CD4-positive, alpha-beta memory T cell (primary cell): ENCODE measurements at regions of chr9 and their contacts with region 1.

Region 1: DNA sequence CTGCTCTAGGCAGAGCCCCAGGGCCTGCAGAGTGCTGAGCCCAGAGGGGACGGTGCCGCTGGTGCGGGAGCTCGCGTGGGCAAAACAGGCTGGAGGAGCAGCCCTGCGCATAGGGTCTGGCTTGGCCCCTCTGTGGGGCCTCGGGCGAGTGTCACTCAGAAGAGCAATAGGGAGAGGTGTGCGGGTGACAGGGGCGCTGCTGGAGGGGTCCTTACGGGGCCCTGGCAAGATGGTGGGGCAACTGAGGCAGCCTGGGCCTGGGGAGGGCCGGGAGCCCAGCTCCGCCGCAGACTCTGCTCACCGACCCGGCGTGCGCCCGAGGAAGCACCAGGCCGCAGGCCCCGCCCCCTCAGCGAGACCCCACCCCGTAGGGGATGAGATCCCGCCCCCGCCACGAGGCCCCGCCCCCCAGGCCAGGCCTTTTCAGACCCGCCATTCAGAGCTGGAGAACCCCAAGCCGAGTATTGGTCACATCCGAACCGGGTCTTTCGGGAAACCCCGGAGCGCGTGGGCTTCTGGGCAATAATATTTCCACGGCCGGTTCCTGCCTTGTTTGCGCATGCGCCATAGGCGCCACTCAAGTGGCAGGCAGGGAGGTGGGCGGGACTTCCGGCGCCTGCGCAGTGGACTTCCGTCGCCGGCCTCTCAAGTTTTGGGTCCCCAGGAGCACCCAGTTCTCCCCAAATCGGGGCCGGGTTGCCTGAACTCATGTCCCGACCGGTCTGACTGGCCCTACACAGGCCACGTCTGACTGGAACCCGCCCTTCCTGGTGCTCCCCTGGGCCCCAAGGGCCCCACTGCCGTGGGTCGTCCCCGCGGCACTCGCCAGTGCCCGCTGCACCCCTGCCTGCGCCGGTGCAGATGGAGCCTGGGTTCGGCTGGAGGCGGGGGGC is 1.3 kb upstream of the RNF208 start:
- DNase-seq: peak; percentile 96 to 99 (median 99)
- H3K4me3 ChIP-seq: peak overlapping the region; percentile 66 to 85
- H3K4me3 Mint-ChIP-seq: peak overlapping the region; percentile 62 to 84 (median 77)
- H3K27ac ChIP-seq: peak overlapping the region; percentile 83
- H3K27ac Mint-ChIP-seq: peak overlapping the region; percentile 42 to 87 (median 68)
- H3K4me1 ChIP-seq: peaks cover 18% of the 10 kb centered on the region
- H3K4me1 Mint-ChIP-seq: peaks cover 2 to 19% (median 6%) of the 10 kb centered on the region in 4 donors
- H3K27me3 ChIP-seq: no peaks in the 10 kb centered on the region
- H3K27me3 Mint-ChIP-seq: peaks cover 2 to 3% of the 10 kb centered on the region in 2 donors

Region 2: GRCh38 chr9:136728080-136728547 is 495.2 kb before region 1 on chr9:
- CTCF ChIA-PET with region 1: no interaction called
- POLR2A ChIA-PET with region 1: interaction called, 3 read pairs
- intact Hi-C with region 1: loop called (anchors 5 kb)
- DNase-seq: peak; percentile 85 to 92 (median 91)
- H3K4me3 ChIP-seq: peak overlapping the region; percentile 88 to 94
- H3K4me3 Mint-ChIP-seq: peak overlapping the region; percentile 48 to 97 (median 76)
- H3K27ac ChIP-seq: peak overlapping the region; percentile 72
- H3K27ac Mint-ChIP-seq: peak overlapping the region in 2 of 7 donors; percentile 51 to 97
- H3K4me1 ChIP-seq: peaks cover 30% of the 10 kb centered on the region
- H3K4me1 Mint-ChIP-seq: peaks cover 7 to 42% (median 22%) of the 10 kb centered on the region in 4 donors
- H3K27me3 ChIP-seq: no peaks in the 10 kb centered on the region
- H3K27me3 Mint-ChIP-seq: peaks cover 0 to 4% of the 10 kb centered on the region in 2 donors

Region 3: GRCh38 chr9:137046098-137046787 is 177.1 kb before region 1 on chr9 and contains the start of gene NPDC1:
- CTCF ChIA-PET with region 1: interaction called, 3 read pairs
- POLR2A ChIA-PET with region 1: no interaction called
- intact Hi-C with region 1: loop called (anchors 1 kb)
- DNase-seq: peak; percentile 72 to 79 (median 77)
- H3K4me3 ChIP-seq: peak within 1 kb of the TSS in 1 of 2 donors; percentile 72
- H3K4me3 Mint-ChIP-seq: peak within 1 kb of the TSS; percentile 72 to 88 (median 82)
- H3K27ac ChIP-seq: no peak within 1 kb of the TSS
- H3K27ac Mint-ChIP-seq: peak within 1 kb of the TSS in 3 of 7 donors; percentile 52 to 84 (median 53)
- H3K4me1 ChIP-seq: peaks cover 37% of the 10 kb centered on the region
- H3K4me1 Mint-ChIP-seq: peaks cover 3 to 22% (median 9%) of the 10 kb centered on the region in 4 donors
- H3K27me3 ChIP-seq: peaks cover 32% of the 10 kb centered on the region
- H3K27me3 Mint-ChIP-seq: peaks cover 15 to 19% of the 10 kb centered on the region in 2 donors
- total RNA-seq, gene NPDC1: 20.7 to 21.4 TPM

Region 4: DNA sequence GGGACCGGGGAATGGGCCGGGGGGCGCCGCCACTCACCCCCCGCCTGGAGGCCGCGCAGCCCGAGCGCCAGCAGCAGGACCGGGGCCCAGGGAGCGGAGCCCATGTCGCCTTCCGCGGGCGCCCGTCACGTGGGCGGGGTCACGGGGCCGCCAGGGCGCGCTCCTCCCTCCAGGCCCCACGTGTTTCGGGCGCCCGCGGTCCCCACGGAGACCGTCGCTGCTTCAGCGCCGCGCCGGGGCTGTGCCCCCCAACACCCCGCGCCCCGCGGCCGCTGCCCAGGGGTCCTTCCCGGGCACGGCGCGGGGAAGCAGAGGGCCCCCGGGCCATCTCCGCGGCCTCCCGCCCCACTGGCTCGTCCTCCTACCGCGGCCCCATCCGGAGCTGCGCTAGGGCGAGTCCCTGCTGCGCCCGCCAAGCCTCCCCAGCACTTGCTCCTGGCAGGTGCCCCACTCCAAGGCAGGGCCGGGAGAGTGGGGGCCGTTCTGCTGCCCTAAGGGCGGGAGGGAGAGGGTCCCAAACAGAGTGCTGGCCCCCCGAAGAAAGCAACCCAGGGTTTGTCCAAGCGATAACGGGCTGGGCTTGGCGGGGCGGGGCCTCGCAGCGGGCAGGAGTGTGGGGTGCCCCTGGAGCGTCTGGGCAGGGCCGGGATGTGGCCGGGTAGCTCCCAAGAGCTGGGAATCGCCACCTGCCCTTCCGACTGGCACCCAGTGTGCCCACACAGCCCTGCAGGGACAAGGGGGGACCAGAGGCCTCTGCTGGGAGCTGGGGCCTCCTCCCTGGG is 108.5 kb before region 1 on chr9 and contains the start of gene DPP7:
- CTCF ChIA-PET with region 1: interaction called, 33 read pairs
- POLR2A ChIA-PET with region 1: interaction called, 4 read pairs
- intact Hi-C with region 1: loop called (anchors 1 kb)
- DNase-seq: peak; percentile 79 to 83 (median 80)
- H3K4me3 ChIP-seq: peak within 1 kb of the TSS in 1 of 2 donors; percentile 43
- H3K4me3 Mint-ChIP-seq: peak within 1 kb of the TSS; percentile 39 to 78 (median 66)
- H3K27ac ChIP-seq: peak within 1 kb of the TSS; percentile 58
- H3K27ac Mint-ChIP-seq: peak within 1 kb of the TSS in 4 of 7 donors; percentile 30 to 50 (median 42)
- H3K4me1 ChIP-seq: peaks cover 16% of the 10 kb centered on the region
- H3K4me1 Mint-ChIP-seq: peaks cover 0 to 17% (median 2%) of the 10 kb centered on the region in 4 donors
- H3K27me3 ChIP-seq: no peaks in the 10 kb centered on the region
- H3K27me3 Mint-ChIP-seq: no peaks in the 10 kb centered on the region
- total RNA-seq, gene DPP7: 357 to 362 TPM

Region 5: GRCh38 chr9:137129456-137130175 is 93.7 kb before region 1 on chr9:
- CTCF ChIA-PET with region 1: interaction called, 9 read pairs
- POLR2A ChIA-PET with region 1: interaction called, 34 read pairs
- intact Hi-C with region 1: loop called (anchors 2 kb)
- DNase-seq: peak; percentile 89 to 92 (median 91)
- H3K4me3 ChIP-seq: peak overlapping the region in 1 of 2 donors; percentile 84
- H3K4me3 Mint-ChIP-seq: peak overlapping the region; percentile 86 to 97 (median 90)
- H3K27ac ChIP-seq: peak overlapping the region; percentile 80
- H3K27ac Mint-ChIP-seq: peak overlapping the region; percentile 82 to 99 (median 92)
- H3K4me1 ChIP-seq: peaks cover 31% of the 10 kb centered on the region
- H3K4me1 Mint-ChIP-seq: peaks cover 23 to 35% (median 30%) of the 10 kb centered on the region in 4 donors
- H3K27me3 ChIP-seq: no peaks in the 10 kb centered on the region
- H3K27me3 Mint-ChIP-seq: peaks cover 2 to 4% of the 10 kb centered on the region in 2 donors

Region 6: DNA sequence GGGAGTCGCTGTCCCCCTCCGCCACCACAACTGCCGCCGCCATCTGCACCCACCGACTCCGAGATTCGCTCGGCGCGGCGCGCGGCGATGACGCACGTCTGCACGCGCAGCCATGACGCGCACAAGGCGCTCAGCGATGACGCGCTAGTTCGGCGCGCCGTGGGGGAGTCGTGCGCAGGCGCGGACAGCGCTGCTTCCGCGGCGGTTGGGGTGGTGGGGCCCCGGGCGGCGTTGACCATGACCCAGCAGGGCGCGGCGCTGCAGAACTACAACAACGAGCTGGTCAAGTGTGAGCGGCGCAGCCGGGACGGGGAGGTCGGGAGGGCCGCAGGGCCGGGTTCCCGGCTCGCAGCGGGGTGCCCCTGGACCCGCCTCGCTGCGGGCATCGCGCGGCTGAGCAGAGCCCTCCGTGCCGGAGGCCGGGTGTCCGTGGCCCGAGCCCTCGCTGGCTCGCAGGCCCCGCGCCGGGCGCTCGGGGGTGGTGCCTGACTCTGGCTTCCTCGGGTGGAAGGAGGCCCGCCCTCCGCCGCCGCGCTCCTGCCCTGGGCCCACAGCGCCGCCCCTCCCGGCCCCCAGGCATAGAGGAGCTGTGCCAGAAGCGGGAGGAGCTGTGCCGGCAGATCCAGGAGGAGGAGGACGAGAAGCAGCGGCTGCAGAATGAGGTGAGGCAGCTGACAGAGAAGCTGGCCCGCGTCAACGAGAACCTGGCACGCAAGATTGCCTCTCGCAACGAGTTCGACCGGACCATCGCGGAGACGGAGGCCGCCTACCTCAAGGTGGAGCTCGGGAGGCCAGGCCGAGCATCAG is 34.6 kb before region 1 on chr9 and contains the starts of genes ANAPC2 and SSNA1:
- CTCF ChIA-PET with region 1: interaction called, 5 read pairs
- POLR2A ChIA-PET with region 1: interaction called, 61 read pairs
- intact Hi-C with region 1: loop called (anchors 1 kb)
- DNase-seq: peak; percentile 84 to 96 (median 92)
- H3K4me3 ChIP-seq: peak within 1 kb of the TSS; percentile 81 to 90
- H3K4me3 Mint-ChIP-seq: peak within 1 kb of the TSS; percentile 91 to 97 (median 94)
- H3K27ac ChIP-seq: peak within 1 kb of the TSS; percentile 96
- H3K27ac Mint-ChIP-seq: peak within 1 kb of the TSS; percentile 91 to 98 (median 96)
- H3K4me1 ChIP-seq: peaks cover 41% of the 10 kb centered on the region
- H3K4me1 Mint-ChIP-seq: peaks cover 22 to 62% (median 33%) of the 10 kb centered on the region in 4 donors
- H3K27me3 ChIP-seq: no peaks in the 10 kb centered on the region
- H3K27me3 Mint-ChIP-seq: no peaks in the 10 kb centered on the region
- total RNA-seq, gene ANAPC2: 116 to 125 TPM
- total RNA-seq, gene SSNA1: 48.6 to 49.5 TPM

Region 7: GRCh38 chr9:137254624-137255447 is 31.5 kb after region 1 on chr9 and contains the start of gene NELFB:
- CTCF ChIA-PET with region 1: no interaction called
- POLR2A ChIA-PET with region 1: interaction called, 18 read pairs
- intact Hi-C with region 1: loop called (anchors 1 kb)
- DNase-seq: peak; percentile 89 to 98 (median 94)
- H3K4me3 ChIP-seq: peak within 1 kb of the TSS; percentile 66 to 81
- H3K4me3 Mint-ChIP-seq: peak within 1 kb of the TSS; percentile 88 to 94 (median 92)
- H3K27ac ChIP-seq: peak within 1 kb of the TSS; percentile 69
- H3K27ac Mint-ChIP-seq: peak within 1 kb of the TSS; percentile 43 to 92 (median 77)
- H3K4me1 ChIP-seq: peaks cover 25% of the 10 kb centered on the region
- H3K4me1 Mint-ChIP-seq: peaks cover 2 to 24% (median 10%) of the 10 kb centered on the region in 4 donors
- H3K27me3 ChIP-seq: no peaks in the 10 kb centered on the region
- H3K27me3 Mint-ChIP-seq: no peaks in the 10 kb centered on the region
- total RNA-seq, gene NELFB: 44.3 to 44.9 TPM

Region 8: DNA sequence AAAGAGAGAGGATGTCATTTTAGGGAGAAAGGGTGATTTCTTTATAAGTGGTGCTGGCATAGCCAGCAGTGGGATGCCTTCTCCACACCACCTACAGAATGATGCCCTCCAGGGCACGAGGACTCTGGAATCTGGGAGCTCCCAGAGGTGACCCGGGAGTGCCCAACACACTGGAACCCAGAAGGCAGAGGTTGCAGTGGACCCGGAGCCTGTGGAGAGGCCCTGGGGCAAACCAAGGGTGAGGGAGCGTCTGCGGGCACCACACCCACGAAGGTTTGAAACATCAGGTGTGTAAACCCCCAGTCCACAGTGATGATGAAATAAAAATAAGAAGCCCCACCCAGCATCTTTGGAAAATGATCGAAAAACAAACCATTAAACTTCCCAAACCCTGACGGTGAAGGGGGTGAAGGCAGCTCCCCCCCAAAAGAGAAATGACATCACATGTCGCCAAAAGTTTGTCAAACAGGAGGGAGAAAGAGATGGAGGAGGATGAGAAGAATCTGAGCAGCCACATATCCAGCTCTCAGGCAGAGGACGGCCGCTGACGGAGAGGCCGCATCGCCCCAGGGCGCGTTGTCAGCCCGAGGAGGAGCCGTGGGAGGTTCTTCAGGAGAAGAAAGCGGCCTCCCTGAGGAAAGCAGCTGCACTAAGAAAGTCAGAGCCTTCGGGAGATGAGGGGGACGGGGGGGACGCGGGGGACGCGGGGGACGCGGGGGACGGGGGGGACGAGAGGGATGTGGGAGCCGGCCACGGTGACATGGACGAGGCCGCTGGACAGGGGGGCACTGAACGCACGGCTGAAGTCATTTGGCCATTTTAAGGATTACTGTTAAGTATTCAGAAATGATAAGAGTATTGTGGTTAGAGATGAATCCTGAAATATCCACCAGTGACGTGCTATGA is 278.9 kb after region 1 on chr9:
- CTCF ChIA-PET with region 1: no interaction called
- POLR2A ChIA-PET with region 1: no interaction called
- intact Hi-C with region 1: no loop called
- DNase-seq: no peak
- H3K4me3 ChIP-seq: no peak overlapping the region
- H3K4me3 Mint-ChIP-seq: peak overlapping the region in 1 of 8 donors; percentile 43
- H3K27ac ChIP-seq: no peak overlapping the region
- H3K27ac Mint-ChIP-seq: peak overlapping the region in 5 of 7 donors; percentile 68 to 89 (median 81)
- H3K4me1 ChIP-seq: no peaks in the 10 kb centered on the region
- H3K4me1 Mint-ChIP-seq: peaks cover 0 to 11% (median 0%) of the 10 kb centered on the region in 4 donors
- H3K27me3 ChIP-seq: no peaks in the 10 kb centered on the region
- H3K27me3 Mint-ChIP-seq: no peaks in the 10 kb centered on the region

Region 9: DNA sequence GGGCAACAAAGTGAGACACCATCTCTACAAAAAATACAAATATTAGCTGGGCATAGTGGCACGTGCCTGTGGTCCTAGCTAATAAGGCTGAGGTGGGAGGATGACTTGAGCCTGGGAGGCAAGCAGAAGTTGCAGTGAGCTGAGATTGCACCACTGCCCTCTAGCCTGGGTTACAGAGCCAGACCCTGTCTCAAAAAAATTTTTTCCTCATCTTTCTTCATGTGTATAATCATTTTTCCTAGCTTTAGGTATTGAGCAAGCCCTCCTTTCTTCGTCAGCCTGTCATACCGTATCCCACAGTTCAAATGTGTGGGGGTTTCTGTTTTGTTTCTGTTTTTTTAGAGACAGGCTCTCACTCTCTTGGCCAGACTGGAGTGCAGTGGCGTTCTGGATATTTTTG is 436.8 kb after region 1 on chr9:
- CTCF ChIA-PET with region 1: no interaction called
- POLR2A ChIA-PET with region 1: no interaction called
- intact Hi-C with region 1: no loop called
- DNase-seq: no peak
- H3K4me3 ChIP-seq: no peak overlapping the region
- H3K4me3 Mint-ChIP-seq: no peak overlapping the region
- H3K27ac ChIP-seq: no peak overlapping the region
- H3K27ac Mint-ChIP-seq: peak overlapping the region in 4 of 7 donors; percentile 24 to 48 (median 41)
- H3K4me1 ChIP-seq: peaks cover 13% of the 10 kb centered on the region
- H3K4me1 Mint-ChIP-seq: peaks cover 28 to 51% (median 39%) of the 10 kb centered on the region in 4 donors
- H3K27me3 ChIP-seq: no peaks in the 10 kb centered on the region
- H3K27me3 Mint-ChIP-seq: no peaks in the 10 kb centered on the region